ENCODE measurements at regions of chr10 and their contacts with region 1.

Region 1: GRCh38 chr10:17607603-17608332 is 9.4 kb downstream of the HACD1 start:
- DNase-seq: peak; percentile 28
- H3K4me3 ChIP-seq: no peak overlapping the region
- H3K27ac ChIP-seq: no peak overlapping the region
- H3K4me1 ChIP-seq: no peaks in the 10 kb centered on the region
- H3K27me3 ChIP-seq: no peaks in the 10 kb centered on the region
- CTCF ChIP-seq: peak; percentile 84 to 90

Region 2: GRCh38 chr10:17479015-17479615 is 128.7 kb before region 1 on chr10:
- CTCF ChIA-PET with region 1: no interaction called
- dilution Hi-C with region 1: no loop called
- in situ Hi-C with region 1: no loop called
- intact Hi-C with region 1: no loop called
- DNase-seq: peak; percentile 2
- H3K4me3 ChIP-seq: no peak overlapping the region
- H3K27ac ChIP-seq: no peak overlapping the region
- H3K4me1 ChIP-seq: no peaks in the 10 kb centered on the region
- H3K27me3 ChIP-seq: no peaks in the 10 kb centered on the region
- CTCF ChIP-seq: no peak

Region 3: DNA sequence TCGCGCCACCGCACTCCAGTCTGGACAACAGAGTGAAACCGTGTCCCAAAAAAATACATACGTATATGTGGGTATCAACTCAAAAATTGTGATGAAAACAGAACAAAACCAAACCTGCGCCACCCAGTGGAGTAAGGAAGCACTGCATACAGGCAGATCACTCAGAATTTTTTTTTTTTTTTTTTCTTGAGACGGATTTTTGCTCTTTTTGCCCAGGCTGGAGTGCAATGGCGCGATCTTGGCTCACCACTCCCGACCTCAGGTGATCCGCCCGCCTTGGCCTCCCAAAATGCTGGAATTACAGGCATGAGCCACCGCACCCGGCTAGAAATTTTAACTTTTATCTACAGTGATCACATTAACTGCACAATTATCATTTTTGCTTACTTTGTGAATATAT is 135.2 kb after region 1 on chr10:
- CTCF ChIA-PET with region 1: no interaction called
- dilution Hi-C with region 1: no loop called
- in situ Hi-C with region 1: loop called (anchors 5 kb)
- intact Hi-C with region 1: loop called (anchors 1 kb)
- DNase-seq: peak; percentile 19
- H3K4me3 ChIP-seq: no peak overlapping the region
- H3K27ac ChIP-seq: no peak overlapping the region
- H3K4me1 ChIP-seq: no peaks in the 10 kb centered on the region
- H3K27me3 ChIP-seq: no peaks in the 10 kb centered on the region
- CTCF ChIP-seq: peak; percentile 73 to 86

Region 4: GRCh38 chr10:17782921-17783665 is 175.3 kb after region 1 on chr10:
- CTCF ChIA-PET with region 1: no interaction called
- dilution Hi-C with region 1: no loop called
- in situ Hi-C with region 1: no loop called
- intact Hi-C with region 1: no loop called
- DNase-seq: peak; percentile 52
- H3K4me3 ChIP-seq: no peak overlapping the region
- H3K27ac ChIP-seq: peak overlapping the region; percentile 63
- H3K4me1 ChIP-seq: peaks cover 35% of the 10 kb centered on the region
- H3K27me3 ChIP-seq: no peaks in the 10 kb centered on the region
- CTCF ChIP-seq: no peak

Region 5: DNA sequence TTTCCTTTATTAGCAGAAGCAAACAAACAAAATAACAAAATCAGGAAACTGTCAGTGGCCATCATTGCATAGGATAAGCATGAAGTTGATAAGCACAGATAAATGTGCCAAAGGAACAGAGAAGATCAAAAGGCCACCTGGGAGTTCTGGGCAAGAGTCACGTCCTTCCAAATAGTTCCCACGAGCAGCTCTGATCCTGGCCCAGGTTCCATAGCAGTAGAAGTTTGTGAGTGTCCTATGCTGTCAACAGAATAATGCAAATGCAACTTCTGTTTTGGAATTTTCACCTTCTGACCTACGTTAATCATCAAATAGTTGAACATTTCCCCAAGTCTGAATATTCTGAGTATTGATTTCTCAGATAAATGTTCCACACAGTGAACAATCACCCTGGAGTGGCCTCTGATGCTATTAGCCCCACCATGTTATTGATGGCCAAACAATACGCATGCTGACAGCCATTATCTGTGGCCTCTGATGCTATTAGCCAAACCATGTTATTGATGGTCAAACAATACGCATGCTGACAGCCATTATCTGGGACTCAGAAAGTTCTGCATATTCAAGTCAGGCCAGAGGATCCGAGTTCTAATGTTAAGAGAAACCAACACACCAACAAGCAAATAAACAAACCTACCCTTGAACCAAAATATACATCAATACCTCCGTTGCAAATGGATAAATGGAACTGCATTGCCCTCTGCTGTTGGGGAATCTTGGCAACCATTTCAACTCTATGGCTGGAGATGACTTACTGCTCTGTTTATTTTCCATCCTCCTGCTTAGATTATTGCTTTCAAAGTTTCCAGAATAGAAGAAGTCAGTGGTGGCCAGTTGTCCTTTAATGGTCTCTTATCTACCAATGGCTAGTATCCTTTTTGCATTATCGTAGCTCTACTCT is 264.7 kb after region 1 on chr10:
- CTCF ChIA-PET with region 1: no interaction called
- dilution Hi-C with region 1: no loop called
- in situ Hi-C with region 1: loop called in 1 of 2 experiments (anchors 25 kb)
- intact Hi-C with region 1: loop called (anchors 1 kb)
- DNase-seq: peak; percentile 8
- H3K4me3 ChIP-seq: no peak overlapping the region
- H3K27ac ChIP-seq: no peak overlapping the region
- H3K4me1 ChIP-seq: no peaks in the 10 kb centered on the region
- H3K27me3 ChIP-seq: no peaks in the 10 kb centered on the region
- CTCF ChIP-seq: peak; percentile 36 to 59

Region 6: GRCh38 chr10:18104223-18104872 is 496.6 kb after region 1 on chr10:
- CTCF ChIA-PET with region 1: no interaction called
- dilution Hi-C with region 1: no loop called
- in situ Hi-C with region 1: no loop called
- intact Hi-C with region 1: loop called (anchors 10 kb)
- DNase-seq: peak; percentile 8
- H3K4me3 ChIP-seq: no peak overlapping the region
- H3K27ac ChIP-seq: no peak overlapping the region
- H3K4me1 ChIP-seq: no peaks in the 10 kb centered on the region
- H3K27me3 ChIP-seq: no peaks in the 10 kb centered on the region
- CTCF ChIP-seq: peak; percentile 49 to 59

Region 7: GRCh38 chr10:18238870-18239485 is 631.2 kb after region 1 on chr10:
- CTCF ChIA-PET with region 1: no interaction called
- dilution Hi-C with region 1: no loop called
- in situ Hi-C with region 1: loop called in 1 of 2 experiments (anchors 25 kb)
- intact Hi-C with region 1: loop called (anchors 2 kb)
- DNase-seq: peak; percentile 20
- H3K4me3 ChIP-seq: no peak overlapping the region
- H3K27ac ChIP-seq: no peak overlapping the region
- H3K4me1 ChIP-seq: no peaks in the 10 kb centered on the region
- H3K27me3 ChIP-seq: no peaks in the 10 kb centered on the region
- CTCF ChIP-seq: peak; percentile 51 to 60

Measured in mammary epithelial cell (primary cell).